Activated CD4-positive, alpha-beta T cell treated with anti-CD3 and anti-CD28 coated beads for 36 hours (primary cell): ENCODE measurements at regions of chr14 and their contacts with region 1.

Region 1: GRCh38 chr14:58637391-58638230 is at the start of gene DACT1:
- DNase-seq: peak; percentile 80
- ATAC-seq: peak; percentile 69
- H3K4me3 Mint-ChIP-seq: peak within 1 kb of the TSS; percentile 76
- H3K27ac Mint-ChIP-seq: peak within 1 kb of the TSS; percentile 85
- H3K4me1 Mint-ChIP-seq: peaks cover 41% of the 10 kb centered on the region
- H3K27me3 Mint-ChIP-seq: peaks cover 12% of the 10 kb centered on the region
- total RNA-seq, gene DACT1: 8.8 to 8.9 TPM

Region 2: DNA sequence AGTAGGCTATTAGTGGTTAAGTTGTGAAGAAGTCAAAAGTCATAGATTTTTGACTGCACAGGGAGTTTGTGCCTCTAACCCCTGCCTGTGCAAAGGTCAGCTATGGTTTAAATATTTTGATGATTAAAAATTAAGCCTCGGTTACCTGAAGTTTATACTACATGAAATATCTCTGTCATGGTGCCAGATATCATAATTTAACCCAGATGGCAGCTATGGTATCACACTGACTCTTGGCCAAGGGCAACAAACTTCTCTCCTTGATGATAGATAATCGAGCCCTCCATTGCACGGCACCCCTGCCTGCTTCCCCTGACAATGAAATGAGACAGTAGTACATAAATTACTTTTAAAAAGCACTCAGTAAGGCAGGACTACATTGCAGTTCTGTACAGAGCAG is 852.6 kb before region 1 on chr14:
- CTCF ChIA-PET with region 1: no interaction called
- POLR2A ChIA-PET with region 1: no interaction called
- intact Hi-C with region 1: no loop called
- DNase-seq: no peak
- ATAC-seq: no peak
- H3K4me3 Mint-ChIP-seq: no peak overlapping the region
- H3K27ac Mint-ChIP-seq: no peak overlapping the region
- H3K4me1 Mint-ChIP-seq: no peaks in the 10 kb centered on the region
- H3K27me3 Mint-ChIP-seq: no peaks in the 10 kb centered on the region

Region 3: GRCh38 chr14:58571769-58572472 is 65.7 kb before region 1 on chr14:
- CTCF ChIA-PET with region 1: interaction called, 5 read pairs
- POLR2A ChIA-PET with region 1: interaction called, 5 read pairs
- intact Hi-C with region 1: loop called (anchors 2 to 5 kb)
- DNase-seq: peak; percentile 83
- ATAC-seq: peak; percentile 90
- H3K4me3 Mint-ChIP-seq: peak overlapping the region; percentile 45
- H3K27ac Mint-ChIP-seq: peak overlapping the region; percentile 93
- H3K4me1 Mint-ChIP-seq: peaks cover 44% of the 10 kb centered on the region
- H3K27me3 Mint-ChIP-seq: no peaks in the 10 kb centered on the region

Region 4: DNA sequence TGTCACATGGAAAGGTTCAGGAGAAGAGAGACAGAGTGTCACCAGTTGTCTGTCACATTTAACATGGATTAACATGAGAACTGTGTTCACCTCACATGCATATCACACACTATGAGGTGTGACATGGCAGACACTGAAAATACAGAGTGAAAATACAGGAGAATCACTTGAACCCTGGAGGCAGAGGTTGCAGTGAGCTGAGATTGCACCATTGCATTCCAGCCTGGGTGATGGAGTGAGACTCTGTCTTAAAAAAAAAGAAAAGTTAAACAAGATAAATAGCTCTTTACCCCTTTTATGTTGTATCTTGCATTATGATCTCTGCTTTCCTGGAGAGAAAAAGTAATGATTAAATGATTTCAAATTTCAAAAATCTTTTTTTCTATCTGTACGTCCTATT is 22.6 kb before region 1 on chr14:
- CTCF ChIA-PET with region 1: no interaction called
- POLR2A ChIA-PET with region 1: no interaction called
- intact Hi-C with region 1: no loop called
- DNase-seq: no peak
- ATAC-seq: no peak
- H3K4me3 Mint-ChIP-seq: no peak overlapping the region
- H3K27ac Mint-ChIP-seq: no peak overlapping the region
- H3K4me1 Mint-ChIP-seq: no peaks in the 10 kb centered on the region
- H3K27me3 Mint-ChIP-seq: no peaks in the 10 kb centered on the region

Region 5: DNA sequence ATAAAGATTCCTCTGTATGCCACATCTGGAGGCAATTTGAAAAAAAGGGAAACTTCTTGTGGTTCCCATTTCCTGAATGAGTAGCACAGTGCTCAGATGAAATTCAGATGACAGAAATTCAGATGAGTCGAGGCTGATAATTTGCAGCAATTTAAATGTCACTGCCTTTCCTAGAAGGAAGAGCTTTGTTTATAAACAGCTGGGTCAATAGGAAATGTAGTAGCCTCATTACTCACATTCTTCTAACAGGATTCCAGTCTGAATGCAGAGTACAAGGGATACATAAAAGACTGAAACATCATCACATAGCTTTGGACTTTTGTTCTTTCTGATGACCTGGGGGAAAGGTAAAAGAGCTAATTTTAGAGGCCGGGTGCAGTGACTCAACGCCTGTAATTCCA is 11.2 kb before region 1 on chr14:
- CTCF ChIA-PET with region 1: interaction called, 3 read pairs
- POLR2A ChIA-PET with region 1: interaction called, 10 read pairs
- intact Hi-C with region 1: no loop called
- DNase-seq: no peak
- ATAC-seq: no peak
- H3K4me3 Mint-ChIP-seq: no peak overlapping the region
- H3K27ac Mint-ChIP-seq: no peak overlapping the region
- H3K4me1 Mint-ChIP-seq: peaks cover 8% of the 10 kb centered on the region
- H3K27me3 Mint-ChIP-seq: no peaks in the 10 kb centered on the region

Region 6: GRCh38 chr14:59028476-59029202 is 391.0 kb after region 1 on chr14:
- CTCF ChIA-PET with region 1: no interaction called
- POLR2A ChIA-PET with region 1: no interaction called
- intact Hi-C with region 1: loop called in 1 of 2 experiments (anchors 5 kb)
- DNase-seq: peak; percentile 66
- ATAC-seq: peak; percentile 79
- H3K4me3 Mint-ChIP-seq: no peak overlapping the region
- H3K27ac Mint-ChIP-seq: no peak overlapping the region
- H3K4me1 Mint-ChIP-seq: peaks cover 2% of the 10 kb centered on the region
- H3K27me3 Mint-ChIP-seq: peaks cover 12% of the 10 kb centered on the region

Region 7: DNA sequence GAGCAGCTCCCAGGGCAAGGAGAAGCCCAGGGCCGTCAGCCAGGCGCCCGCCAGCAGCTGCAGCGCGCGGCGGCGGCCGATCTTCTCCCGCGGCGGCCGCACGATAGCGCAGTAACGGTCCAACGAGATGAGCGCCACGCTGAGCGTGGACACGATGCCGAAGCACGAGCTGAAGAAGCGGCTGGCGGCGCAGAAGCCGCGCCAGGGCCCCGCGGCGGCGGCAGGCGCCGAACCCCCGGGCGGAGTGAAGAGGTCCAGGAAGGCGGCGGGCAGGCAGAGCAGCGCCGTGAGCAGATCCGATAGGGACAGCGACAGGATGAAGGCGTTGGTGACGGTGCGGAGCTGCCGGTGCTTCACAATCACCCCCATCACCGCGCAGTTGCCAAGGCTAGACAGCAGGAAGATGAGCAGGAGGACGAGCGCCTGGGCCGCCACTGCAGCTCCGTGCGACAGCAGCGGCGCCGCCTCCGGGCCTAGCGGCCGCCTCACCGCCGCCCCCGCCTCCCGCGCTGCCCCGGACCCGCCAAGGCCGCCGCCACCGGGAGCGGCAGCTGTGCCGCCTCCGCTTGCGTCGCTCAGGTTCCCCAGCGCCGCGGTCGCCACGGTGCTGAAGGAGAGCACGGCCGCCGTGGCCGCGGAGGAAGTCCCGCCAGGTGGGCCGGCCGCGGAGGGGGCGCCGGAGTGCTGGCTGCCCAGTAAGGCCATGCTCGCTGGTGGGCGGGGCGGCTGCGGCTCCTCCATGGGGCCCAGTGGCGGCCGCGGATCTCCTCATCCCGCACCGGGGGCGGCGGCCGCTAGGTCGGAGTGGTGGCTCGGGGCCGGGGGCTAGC is 827.1 kb after region 1 on chr14:
- CTCF ChIA-PET with region 1: no interaction called
- POLR2A ChIA-PET with region 1: no interaction called
- intact Hi-C with region 1: loop called in 1 of 2 experiments (anchors 1 kb)
- DNase-seq: peak; percentile 68
- ATAC-seq: peak; percentile 77
- H3K4me3 Mint-ChIP-seq: peak overlapping the region; percentile 73
- H3K27ac Mint-ChIP-seq: no peak overlapping the region
- H3K4me1 Mint-ChIP-seq: peaks cover 7% of the 10 kb centered on the region
- H3K27me3 Mint-ChIP-seq: peaks cover 3% of the 10 kb centered on the region